Left lung (tissue), 14 donors: ENCODE measurements at regions of chr7 and their contacts with region 1.

Region 1: DNA sequence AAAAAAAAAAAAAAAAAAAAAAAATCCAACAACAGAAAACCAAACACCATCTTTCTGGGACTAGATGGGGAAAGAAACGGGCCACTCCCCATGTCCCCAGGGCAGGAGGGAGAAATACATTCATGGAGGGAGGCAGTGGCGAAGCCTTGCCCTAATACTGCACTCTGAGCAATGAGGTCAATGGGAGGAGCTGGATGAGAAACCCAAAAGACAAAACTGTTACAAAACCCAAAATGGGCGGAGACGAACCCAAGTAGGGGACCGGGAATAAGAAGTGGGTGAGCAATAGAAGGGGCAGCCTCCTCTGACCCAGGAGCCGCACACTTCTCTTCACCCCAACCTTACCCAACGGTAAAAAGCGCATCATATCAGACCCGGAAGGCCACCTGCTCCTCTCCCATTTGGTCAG is 6.6 kb downstream of the GNB2 start:
- DNase-seq: no peak
- ATAC-seq: peak; percentile 3
- H3K4me3 ChIP-seq: no peak overlapping the region
- H3K27ac ChIP-seq: peak overlapping the region in 1 of 2 donors; percentile 50
- H3K4me1 ChIP-seq: peaks cover 5 to 50% of the 10 kb centered on the region in 2 donors
- H3K27me3 ChIP-seq: no peaks in the 10 kb centered on the region
- CTCF ChIP-seq: no peak

Region 2: DNA sequence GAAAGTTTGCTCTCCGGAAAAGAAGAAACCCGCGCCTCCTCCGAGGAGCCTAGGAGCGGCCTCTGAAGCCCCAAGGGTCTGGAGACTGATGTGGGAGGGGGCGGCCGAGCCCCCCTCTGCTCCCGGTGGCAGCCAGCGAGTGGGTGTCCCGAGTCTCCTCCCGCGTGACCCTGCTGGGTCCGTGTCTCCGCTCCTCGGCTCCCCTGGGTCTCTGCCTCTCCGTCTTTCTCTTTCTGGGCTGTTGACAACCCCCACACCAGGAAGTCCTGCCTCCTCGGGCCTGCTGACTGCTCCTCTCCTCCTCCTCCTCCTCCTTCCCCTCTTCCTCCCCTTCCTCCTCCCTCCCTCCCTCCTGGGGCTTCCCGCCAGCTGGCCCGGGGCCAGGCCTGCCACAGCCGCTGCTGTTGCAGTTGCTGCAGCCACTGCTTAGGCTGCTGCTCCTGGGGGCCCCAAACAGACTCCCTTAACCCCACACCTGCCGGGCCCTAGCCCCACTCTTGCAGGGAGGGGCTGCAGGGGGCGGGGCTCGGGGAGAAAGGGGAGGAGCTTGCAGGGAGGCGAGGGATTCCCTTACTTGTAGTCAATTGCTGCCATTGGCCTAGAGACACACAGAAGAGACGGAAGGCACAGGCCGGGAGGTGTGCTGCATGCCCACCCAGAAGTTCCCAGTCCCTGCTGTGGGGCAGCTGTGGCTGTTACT is 201.1 kb before region 1 on chr7 and contains the start of gene TSC22D4:
- intact Hi-C with region 1: loop called in 1 of 2 experiments (anchors 10 kb)
- DNase-seq: peak; percentile 94 to 98 (median 96)
- ATAC-seq: peak; percentile 93
- H3K4me3 ChIP-seq: peak within 1 kb of the TSS; percentile 77 to 97
- H3K27ac ChIP-seq: peak within 1 kb of the TSS; percentile 85 to 96
- H3K4me1 ChIP-seq: peaks cover 20 to 57% of the 10 kb centered on the region in 2 donors
- H3K27me3 ChIP-seq: peaks cover 0 to 6% of the 10 kb centered on the region in 2 donors
- CTCF ChIP-seq: no peak
- polyA plus RNA-seq, gene TSC22D4: 47.0 to 65.1 (median 57.3) TPM

Region 3: GRCh38 chr7:100799014-100799896 is 119.1 kb after region 1 on chr7:
- intact Hi-C with region 1: no loop called
- DNase-seq: peak in 2 of 4 donors; percentile 65 to 72
- ATAC-seq: peak; percentile 50
- H3K4me3 ChIP-seq: no peak overlapping the region
- H3K27ac ChIP-seq: no peak overlapping the region
- H3K4me1 ChIP-seq: peaks cover 24 to 47% of the 10 kb centered on the region in 2 donors
- H3K27me3 ChIP-seq: peaks cover 0 to 5% of the 10 kb centered on the region in 2 donors
- CTCF ChIP-seq: peak; percentile 70